AG04449 (cell line): ENCODE measurements at regions of chr16 and their contacts with region 1.

Region 1: DNA sequence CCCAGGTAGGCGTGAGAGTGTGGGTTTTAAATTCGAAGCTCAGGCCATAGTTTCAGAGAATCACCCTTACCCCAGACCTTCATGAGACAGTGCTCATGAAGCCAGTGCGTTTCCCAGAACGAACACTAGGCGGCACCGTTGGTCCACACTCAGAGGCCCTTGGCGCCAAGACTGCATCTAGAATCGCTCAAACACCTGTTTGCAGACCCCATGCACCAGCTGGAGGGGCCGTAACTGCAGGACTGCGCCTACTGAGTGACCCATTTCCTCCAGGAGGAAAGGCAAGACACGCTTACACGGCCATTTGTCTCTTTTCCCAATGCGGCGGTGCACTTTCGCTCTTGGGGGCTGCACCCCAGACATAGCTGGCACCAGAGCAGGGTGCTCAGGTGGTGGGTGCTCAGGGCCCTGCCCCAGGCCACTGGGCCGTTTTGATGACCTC is 34.0 kb downstream of the ADGRG5 start:
- DNase-seq: no peak
- H3K4me3 ChIP-seq: no peak overlapping the region
- CTCF ChIP-seq: peak; percentile 85

Region 2: GRCh38 chr16:57591086-57591869 is 14.8 kb after region 1 on chr16:
- CTCF ChIA-PET with region 1: interaction called, 166 read pairs
- POLR2A ChIA-PET with region 1: no interaction called
- DNase-seq: no peak
- H3K4me3 ChIP-seq: no peak overlapping the region; the same call in 1 of the 2 replicates
- CTCF ChIP-seq: peak; percentile 91

Region 3: DNA sequence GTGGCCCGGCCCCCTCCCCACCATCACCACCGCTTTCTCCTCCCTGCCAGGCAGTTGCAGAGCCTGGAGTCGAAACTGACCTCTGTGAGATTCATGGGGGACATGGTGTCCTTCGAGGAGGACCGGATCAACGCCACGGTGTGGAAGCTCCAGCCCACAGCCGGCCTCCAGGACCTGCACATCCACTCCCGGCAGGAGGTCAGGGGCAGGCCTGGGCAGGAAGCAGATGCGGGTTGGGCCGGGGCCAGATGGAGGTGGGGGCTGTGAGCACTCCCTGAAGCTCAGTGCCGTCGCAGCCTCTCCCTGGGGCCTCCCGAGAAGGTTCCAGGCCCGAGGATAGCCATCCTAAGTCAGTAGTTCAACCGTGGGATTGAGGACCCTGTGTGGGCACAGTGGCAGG is 77.5 kb after region 1 on chr16:
- CTCF ChIA-PET with region 1: interaction called, 181 read pairs
- POLR2A ChIA-PET with region 1: no interaction called
- DNase-seq: no peak
- H3K4me3 ChIP-seq: no peak overlapping the region
- CTCF ChIP-seq: no peak

Region 4: GRCh38 chr16:57720142-57720575 is 143.7 kb after region 1 on chr16:
- CTCF ChIA-PET with region 1: interaction called, 29 read pairs
- POLR2A ChIA-PET with region 1: no interaction called
- DNase-seq: no peak
- H3K4me3 ChIP-seq: no peak overlapping the region
- CTCF ChIP-seq: peak; percentile 84

Region 5: DNA sequence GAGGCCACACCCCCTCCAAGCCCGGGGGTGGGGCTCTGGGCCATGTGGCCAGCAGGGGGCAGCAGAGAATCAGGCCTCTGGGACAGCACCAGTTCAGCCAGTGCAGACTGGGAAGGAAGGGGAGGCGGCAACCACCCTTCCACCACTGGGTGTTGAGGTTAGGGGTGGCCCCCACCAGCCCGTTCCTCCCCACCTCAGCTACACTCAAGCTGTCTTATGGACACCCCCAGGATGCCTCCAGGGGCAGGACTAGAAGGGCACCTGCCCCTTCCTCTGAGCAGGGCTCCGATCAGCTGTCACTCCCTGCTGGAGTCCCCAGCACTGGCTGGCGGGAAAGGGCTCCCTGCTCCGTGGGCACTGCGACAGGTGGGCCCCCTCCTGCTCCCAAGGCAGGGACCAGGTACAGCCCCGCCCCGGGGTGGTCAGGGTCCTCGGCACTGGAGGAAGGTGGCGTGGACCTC is 180.9 kb after region 1 on chr16:
- CTCF ChIA-PET with region 1: interaction called, 15 read pairs
- POLR2A ChIA-PET with region 1: no interaction called
- DNase-seq: peak; percentile 17
- H3K4me3 ChIP-seq: no peak overlapping the region
- CTCF ChIP-seq: peak; percentile 96